ENCODE measurements at regions of chr2 and their contacts with region 1.

Region 1: GRCh38 chr2:69643602-69644505 is at the start of gene AAK1:
- DNase-seq: peak; percentile 92
- ATAC-seq: peak; percentile 91 to 96 (median 94)
- H3K4me3 ChIP-seq: peak within 1 kb of the TSS; percentile 77 to 99 (median 92)
- H3K27ac ChIP-seq: peak within 1 kb of the TSS; percentile 90 to 99 (median 98)
- H3K4me1 ChIP-seq: peaks cover 0 to 60% (median 45%) of the 10 kb centered on the region in 9 donors
- H3K27me3 ChIP-seq: no peaks in the 10 kb centered on the region
- CTCF ChIP-seq: peak in 3 of 9 donors; percentile 6 to 40 (median 25)
- total RNA-seq, gene AAK1: 70.2 to 148 (median 125) TPM

Region 2: DNA sequence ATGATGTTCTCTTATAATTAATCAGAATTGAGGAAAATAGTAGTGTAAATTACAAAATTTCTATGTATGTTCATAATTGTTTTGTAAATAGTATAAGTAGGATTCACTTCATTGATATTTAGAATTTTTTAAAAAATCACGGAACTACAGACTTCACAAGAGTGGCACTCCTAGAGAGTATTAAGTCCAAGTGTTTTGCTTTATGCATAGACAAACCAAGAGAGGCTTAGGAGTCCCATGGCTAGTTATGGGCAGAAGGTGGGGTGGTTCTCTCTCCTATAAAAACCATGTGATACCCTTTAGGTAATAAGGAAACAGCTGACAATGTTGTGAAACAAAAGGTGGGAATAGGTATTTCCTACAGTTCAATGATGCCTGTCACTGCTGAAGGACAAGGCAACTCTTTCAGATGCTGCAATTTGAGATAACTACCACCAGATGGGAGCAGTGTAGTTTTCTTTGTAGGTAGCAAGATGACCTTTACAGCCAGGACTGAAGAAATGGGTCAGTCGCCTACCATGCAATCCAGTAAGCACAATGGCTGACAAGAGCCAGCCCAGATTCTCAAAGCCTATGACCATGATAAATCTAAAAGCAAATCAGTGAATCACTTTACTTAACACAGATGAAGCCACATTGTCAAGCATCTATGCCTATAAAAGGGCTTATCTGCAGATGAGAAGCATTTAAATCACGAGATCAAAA is 84.3 kb before region 1 on chr2:
- intact Hi-C with region 1: loop called in 5 of 10 experiments (anchors 2 to 10 kb)
- DNase-seq: no peak
- ATAC-seq: peak; percentile 71 to 84 (median 76)
- H3K4me3 ChIP-seq: no peak overlapping the region
- H3K27ac ChIP-seq: peak overlapping the region in 2 of 10 donors; percentile 4 to 10
- H3K4me1 ChIP-seq: peaks cover 11 to 76% (median 44%) of the 10 kb centered on the region in 9 donors
- H3K27me3 ChIP-seq: no peaks in the 10 kb centered on the region
- CTCF ChIP-seq: peak in 8 of 9 donors; percentile 44 to 81 (median 72)

Region 3: GRCh38 chr2:69572641-69573040 is 71.2 kb before region 1 on chr2:
- intact Hi-C with region 1: loop called in 9 of 10 experiments (anchors 5 to 10 kb)
- DNase-seq: no peak
- ATAC-seq: peak in 4 of 8 donors; percentile 19 to 36 (median 24)
- H3K4me3 ChIP-seq: no peak overlapping the region
- H3K27ac ChIP-seq: peak overlapping the region in 4 of 10 donors; percentile 55 to 66 (median 56)
- H3K4me1 ChIP-seq: peaks cover 12 to 78% (median 60%) of the 10 kb centered on the region in 9 donors
- H3K27me3 ChIP-seq: no peaks in the 10 kb centered on the region
- CTCF ChIP-seq: no peak

Region 4: DNA sequence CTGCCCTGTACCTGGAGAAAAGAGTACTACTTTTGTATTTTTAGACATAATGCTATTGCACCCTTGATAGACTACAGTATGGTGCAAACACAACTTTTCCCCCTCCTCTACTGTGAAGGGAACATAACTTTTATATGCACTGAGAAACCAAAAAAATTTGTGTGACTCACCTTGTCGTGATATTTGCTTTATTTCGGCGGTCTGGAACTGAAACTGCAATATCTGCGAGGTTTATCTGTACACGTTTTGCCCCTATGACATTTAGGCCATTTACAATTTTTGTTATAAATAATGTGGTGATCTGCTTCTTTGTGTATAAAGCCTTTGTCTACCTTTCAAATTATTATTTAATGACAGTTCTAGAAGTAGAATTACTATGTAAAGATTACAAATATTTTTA is 34.1 kb after region 1 on chr2:
- intact Hi-C with region 1: loop called in 4 of 10 experiments (anchors 5 kb)
- DNase-seq: no peak
- ATAC-seq: no peak
- H3K4me3 ChIP-seq: no peak overlapping the region
- H3K27ac ChIP-seq: no peak overlapping the region
- H3K4me1 ChIP-seq: peaks cover 0 to 41% (median 9%) of the 10 kb centered on the region in 9 donors
- H3K27me3 ChIP-seq: no peaks in the 10 kb centered on the region
- CTCF ChIP-seq: no peak

Region 5: DNA sequence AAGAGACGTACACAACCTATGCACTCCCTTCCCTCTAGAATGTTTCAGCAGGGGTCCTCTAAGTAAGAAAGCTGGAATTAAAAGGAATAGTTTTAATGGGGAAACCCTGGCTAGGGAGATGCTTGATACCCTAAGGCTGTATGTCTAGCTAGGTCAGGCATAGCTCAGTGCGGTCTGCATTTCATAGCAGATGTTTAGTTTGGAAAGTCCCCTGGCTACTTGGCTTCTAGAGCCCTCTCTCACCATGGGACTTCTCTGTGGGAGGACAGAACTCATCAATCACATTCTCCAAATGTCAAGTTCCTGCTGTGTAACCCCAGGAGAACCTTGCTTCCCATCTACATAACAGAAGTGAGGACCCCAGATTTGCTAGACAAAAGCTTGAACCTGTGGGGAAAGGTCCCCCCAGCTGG is 74.0 kb after region 1 on chr2:
- intact Hi-C with region 1: loop called in 7 of 10 experiments (anchors 5 to 10 kb)
- DNase-seq: no peak
- ATAC-seq: no peak
- H3K4me3 ChIP-seq: no peak overlapping the region
- H3K27ac ChIP-seq: no peak overlapping the region
- H3K4me1 ChIP-seq: peaks cover 0 to 9% (median 4%) of the 10 kb centered on the region in 9 donors
- H3K27me3 ChIP-seq: no peaks in the 10 kb centered on the region
- CTCF ChIP-seq: no peak

Measured in heart right ventricle (tissue), 16 donors.